ENCODE measurements at regions of chr18 and their contacts with region 1.

Region 1: GRCh38 chr18:59070181-59070912 is 69.3 kb upstream of the SEC11C start:
- DNase-seq: peak; percentile 55 to 86
- ATAC-seq: peak; percentile 96
- H3K4me3 ChIP-seq: no peak overlapping the region
- H3K27ac ChIP-seq: peak overlapping the region; percentile 73 to 84
- H3K4me1 ChIP-seq: peaks cover 28% of the 10 kb centered on the region
- CTCF ChIP-seq: peak; percentile 74
- EP300 ChIP-seq: no peak
- POLR2A ChIP-seq: no peak
- RAD21 ChIP-seq: peak; percentile 90 to 94

Region 2: GRCh38 chr18:58952858-58953257 is 117.5 kb before region 1 on chr18:
- CTCF ChIA-PET with region 1: interaction called, 10 read pairs
- POLR2A ChIA-PET with region 1: no interaction called
- DNase-seq: peak; percentile 15 to 80
- ATAC-seq: peak in 1 of 2 experiments; percentile 87; a peak in 3 of 6 replicates
- H3K4me3 ChIP-seq: no peak overlapping the region
- H3K27ac ChIP-seq: peak overlapping the region; percentile 76 to 88
- H3K4me1 ChIP-seq: peaks cover 76% of the 10 kb centered on the region
- CTCF ChIP-seq: no peak
- EP300 ChIP-seq: 0 out of 5 replicates have a peak, but pooled peaks of 1 of the 2 experiments have one; percentile 48
- POLR2A ChIP-seq: no peak
- RAD21 ChIP-seq: no peak

Region 3: DNA sequence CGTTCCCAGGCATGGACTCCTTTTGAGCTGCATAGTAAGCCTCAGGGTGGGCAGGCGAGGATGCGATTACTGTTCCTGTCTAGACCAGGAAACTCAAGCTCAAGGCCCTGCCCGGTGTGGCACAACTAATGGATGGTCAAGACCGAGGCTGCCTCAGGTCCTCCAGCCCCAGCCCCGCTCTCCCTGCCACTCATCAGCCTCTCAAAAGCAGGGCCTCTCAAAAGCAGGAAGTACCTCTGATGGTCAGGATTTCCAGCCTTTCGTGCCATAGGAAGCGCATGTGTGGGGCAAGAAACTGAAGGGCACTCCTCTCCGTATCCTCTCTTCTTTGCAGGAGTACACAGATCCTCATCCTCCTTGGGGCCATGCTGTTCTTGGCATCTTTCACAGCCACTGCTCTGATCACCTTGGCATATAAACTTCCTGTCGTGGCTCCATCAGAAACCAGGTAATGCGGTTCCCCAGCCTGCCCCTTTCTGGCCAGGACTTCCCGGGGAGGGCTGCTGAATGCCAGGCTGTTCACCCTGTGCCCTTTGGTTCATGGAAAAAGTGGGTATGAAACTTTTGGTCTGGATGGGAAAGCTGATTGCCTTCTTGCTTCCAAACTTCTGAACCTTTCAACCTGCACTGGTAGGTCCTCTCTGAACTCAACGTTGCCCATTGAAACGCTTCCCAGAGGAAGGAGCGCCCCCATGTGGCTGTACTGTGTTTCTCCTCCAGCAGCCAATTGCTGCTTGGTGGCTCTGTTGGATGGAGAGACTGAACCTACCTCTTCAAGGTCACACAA is 13.4 kb before region 1 on chr18:
- CTCF ChIA-PET with region 1: interaction called, 16 read pairs
- POLR2A ChIA-PET with region 1: no interaction called
- DNase-seq: peak in 1 of 2 experiments; percentile 74
- ATAC-seq: peak; percentile 47 to 86; a peak in 3 of 6 replicates
- H3K4me3 ChIP-seq: no peak overlapping the region
- H3K27ac ChIP-seq: peak overlapping the region; percentile 65 to 78
- H3K4me1 ChIP-seq: peaks cover 16% of the 10 kb centered on the region; the same call in 2 of the 3 replicates
- CTCF ChIP-seq: peak; percentile 46
- EP300 ChIP-seq: no peak
- POLR2A ChIP-seq: no peak
- RAD21 ChIP-seq: peak; percentile 74 to 86

Region 4: GRCh38 chr18:59085797-59086196 is 15.4 kb after region 1 on chr18:
- CTCF ChIA-PET with region 1: interaction called, 52 read pairs
- POLR2A ChIA-PET with region 1: no interaction called
- DNase-seq: no peak
- ATAC-seq: no peak
- H3K4me3 ChIP-seq: no peak overlapping the region
- H3K27ac ChIP-seq: no peak overlapping the region
- H3K4me1 ChIP-seq: no peaks in the 10 kb centered on the region; the same call in 2 of the 3 replicates
- CTCF ChIP-seq: no peak
- EP300 ChIP-seq: no peak
- POLR2A ChIP-seq: no peak
- RAD21 ChIP-seq: no peak

Region 5: GRCh38 chr18:59096098-59096789 is 25.9 kb after region 1 on chr18:
- CTCF ChIA-PET with region 1: no interaction called
- POLR2A ChIA-PET with region 1: no interaction called
- DNase-seq: no peak
- ATAC-seq: no peak
- H3K4me3 ChIP-seq: no peak overlapping the region
- H3K27ac ChIP-seq: no peak overlapping the region
- H3K4me1 ChIP-seq: no peaks in the 10 kb centered on the region
- CTCF ChIP-seq: no peak
- EP300 ChIP-seq: no peak
- POLR2A ChIP-seq: no peak
- RAD21 ChIP-seq: no peak